ENCODE measurements at regions of chr13 and their contacts with region 1.

Region 1: DNA sequence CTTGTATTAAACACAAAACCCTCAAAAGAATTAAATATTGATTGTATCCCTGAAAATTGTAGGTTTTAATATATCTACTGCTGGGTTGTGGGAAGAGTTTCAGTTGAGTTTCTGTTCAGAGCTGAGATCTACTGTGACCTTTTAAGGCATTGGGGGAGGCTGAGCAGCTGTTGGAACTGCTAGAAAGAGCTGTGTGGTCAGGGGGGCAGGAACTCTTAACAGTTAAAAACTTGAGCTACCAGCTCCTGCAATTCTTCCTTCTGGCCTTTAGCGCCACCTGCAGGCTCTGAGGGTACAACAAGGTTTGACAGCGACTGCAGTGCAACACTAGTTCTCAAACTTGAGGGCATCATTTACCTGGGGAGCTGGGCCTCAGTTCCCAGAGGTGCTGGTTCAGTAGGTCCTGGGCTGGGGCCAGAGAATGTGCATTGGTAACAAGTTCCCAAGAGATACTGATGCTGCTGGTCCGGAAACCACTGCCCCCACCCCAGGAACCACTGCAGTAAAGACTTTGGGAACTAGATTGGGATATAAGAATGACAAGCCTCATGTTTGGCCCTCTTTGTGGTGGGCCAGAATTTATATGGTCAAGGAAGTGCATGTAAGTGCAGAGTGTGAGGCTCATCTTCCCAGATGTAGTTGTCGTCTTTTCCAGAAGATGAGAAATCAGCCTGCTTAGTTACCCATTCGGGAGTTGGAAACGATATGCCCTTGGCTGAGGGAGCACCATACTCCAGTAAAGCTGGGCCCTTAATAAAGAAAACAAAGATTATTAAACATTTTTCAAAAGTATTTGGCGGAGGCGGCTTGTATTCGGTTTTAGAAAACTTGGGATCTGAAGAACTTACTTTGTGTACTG is 2.6 kb downstream of the RNASEH2B start:
- DNase-seq: peak; percentile 58 to 91 (median 66)
- ATAC-seq: peak; percentile 67
- H3K4me3 ChIP-seq: peak overlapping the region; percentile 73; the same call in 1 of the 2 replicates
- H3K27ac ChIP-seq: peak overlapping the region; percentile 97
- H3K4me1 ChIP-seq: peaks cover 24 to 38% of the 10 kb centered on the region in 2 experiments
- H3K27me3 ChIP-seq: no peaks in the 10 kb centered on the region
- CTCF ChIP-seq: peak; percentile 67 to 80 (median 78)
- EP300 ChIP-seq: peak; percentile 80
- POLR2A ChIP-seq: no peak
- RAD21 ChIP-seq: peak; percentile 74 to 76

Region 2: DNA sequence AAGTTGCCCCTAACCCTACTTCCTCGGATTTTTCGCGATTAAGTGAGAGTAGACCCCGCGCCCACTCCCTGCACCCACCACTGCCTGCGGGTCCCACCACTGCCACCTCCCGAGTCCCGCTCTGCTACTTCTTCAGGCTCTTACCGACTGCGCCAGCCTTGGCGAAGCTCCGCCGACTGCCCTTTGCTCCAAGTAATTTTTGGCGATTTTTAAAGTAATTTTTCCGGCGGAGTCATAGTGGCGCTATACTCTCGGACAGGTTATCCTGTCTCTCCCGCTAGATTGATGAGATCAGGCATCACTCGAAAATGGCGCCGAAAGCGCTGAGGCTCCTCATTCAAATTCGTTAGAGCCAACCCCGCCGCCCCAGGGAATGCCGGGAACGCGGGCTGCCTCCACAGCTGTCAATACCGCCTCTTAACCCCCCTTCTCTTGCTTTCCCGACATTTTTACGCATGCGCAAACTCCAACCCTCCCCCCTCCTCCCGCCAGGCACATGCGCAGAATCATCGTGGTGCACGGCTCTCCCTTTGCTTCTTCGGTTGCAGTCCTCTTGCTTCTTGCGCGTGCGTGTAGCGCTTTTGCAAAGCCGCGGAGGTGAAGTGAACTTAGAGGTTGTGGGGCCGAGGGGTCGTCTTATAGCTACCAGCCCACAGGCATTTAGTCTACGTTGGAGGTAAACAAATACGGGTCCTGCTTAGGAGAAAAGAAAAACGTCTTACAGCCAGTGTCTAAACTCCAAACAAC is 830.3 kb before region 1 on chr13:
- CTCF ChIA-PET with region 1: no interaction called
- POLR2A ChIA-PET with region 1: interaction called, 3 read pairs
- in situ Hi-C with region 1: no loop called
- intact Hi-C with region 1: loop called (anchors 5 kb)
- DNase-seq: peak; percentile 86 to 97 (median 90)
- ATAC-seq: peak; percentile 74
- H3K4me3 ChIP-seq: peak overlapping the region; percentile 69
- H3K27ac ChIP-seq: peak overlapping the region; percentile 98
- H3K4me1 ChIP-seq: peaks cover 2 to 5% of the 10 kb centered on the region in 2 experiments; a peak in 2 of 5 replicates
- H3K27me3 ChIP-seq: no peaks in the 10 kb centered on the region
- CTCF ChIP-seq: peak in 2 of 3 experiments; percentile 8 to 23; a peak in 2 of 6 replicates
- EP300 ChIP-seq: no peak; the same call in 1 of the 2 replicates
- POLR2A ChIP-seq: peak; percentile 82
- RAD21 ChIP-seq: no peak

Region 3: GRCh38 chr13:50421473-50422130 is 490.6 kb before region 1 on chr13:
- CTCF ChIA-PET with region 1: no interaction called
- POLR2A ChIA-PET with region 1: no interaction called
- in situ Hi-C with region 1: no loop called
- intact Hi-C with region 1: loop called (anchors 10 kb)
- DNase-seq: no peak
- ATAC-seq: peak; percentile 40
- H3K4me3 ChIP-seq: no peak overlapping the region
- H3K27ac ChIP-seq: peak overlapping the region; percentile 75; the same call in 2 of the 3 replicates
- H3K4me1 ChIP-seq: peaks cover 0 to 38% of the 10 kb centered on the region in 2 experiments; a peak in 2 of 5 replicates
- H3K27me3 ChIP-seq: no peaks in the 10 kb centered on the region
- CTCF ChIP-seq: no peak
- EP300 ChIP-seq: no peak
- POLR2A ChIP-seq: no peak
- RAD21 ChIP-seq: no peak

Region 4: GRCh38 chr13:50617134-50617721 is 294.9 kb before region 1 on chr13:
- CTCF ChIA-PET with region 1: no interaction called
- POLR2A ChIA-PET with region 1: no interaction called
- in situ Hi-C with region 1: no loop called
- intact Hi-C with region 1: loop called (anchors 10 kb)
- DNase-seq: no peak
- ATAC-seq: no peak
- H3K4me3 ChIP-seq: no peak overlapping the region
- H3K27ac ChIP-seq: no peak overlapping the region
- H3K4me1 ChIP-seq: peaks cover 3 to 23% of the 10 kb centered on the region in 2 experiments; a peak in 3 of 5 replicates
- H3K27me3 ChIP-seq: no peaks in the 10 kb centered on the region
- CTCF ChIP-seq: no peak
- EP300 ChIP-seq: no peak
- POLR2A ChIP-seq: no peak
- RAD21 ChIP-seq: no peak

Region 5: DNA sequence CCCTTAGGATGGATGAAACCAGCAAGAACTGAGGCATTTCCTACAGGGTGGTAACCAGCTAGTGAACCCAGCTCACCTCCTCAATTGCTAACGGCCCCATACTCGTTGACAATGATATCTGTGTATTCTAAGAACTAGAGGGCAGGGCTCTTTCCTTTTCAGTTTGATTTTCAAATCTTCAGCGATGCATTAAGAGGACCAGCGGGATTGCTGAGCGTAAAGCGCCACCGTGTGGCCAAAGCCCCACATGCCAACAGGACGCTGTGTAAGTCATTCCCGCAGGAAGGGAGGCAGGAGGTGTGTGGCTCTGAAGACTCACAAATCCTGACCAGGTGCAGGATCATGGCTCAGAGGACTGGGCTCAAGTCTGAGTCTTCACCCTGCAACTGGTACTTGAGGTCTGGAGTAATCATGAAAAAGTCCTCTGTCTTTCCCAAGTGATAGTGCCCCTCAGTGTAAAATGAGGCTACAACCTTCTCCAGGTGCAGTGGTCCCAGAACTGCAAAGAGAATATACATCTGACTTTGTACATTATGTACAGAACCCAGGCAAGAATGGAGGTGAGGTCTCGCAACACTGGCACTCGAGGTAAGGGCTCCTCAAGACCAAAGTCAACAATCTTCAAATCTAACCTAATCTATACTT is 158.0 kb after region 1 on chr13:
- CTCF ChIA-PET with region 1: no interaction called
- POLR2A ChIA-PET with region 1: no interaction called
- in situ Hi-C with region 1: no loop called
- intact Hi-C with region 1: loop called (anchors 10 kb)
- DNase-seq: peak; percentile 48 to 76 (median 58)
- ATAC-seq: peak; percentile 96
- H3K4me3 ChIP-seq: no peak overlapping the region
- H3K27ac ChIP-seq: no peak overlapping the region
- H3K4me1 ChIP-seq: no peaks in the 10 kb centered on the region
- H3K27me3 ChIP-seq: peaks cover 0 to 22% of the 10 kb centered on the region in 2 experiments; a peak in 4 of 5 replicates
- CTCF ChIP-seq: peak; percentile 71 to 88 (median 85)
- EP300 ChIP-seq: no peak
- POLR2A ChIP-seq: no peak
- RAD21 ChIP-seq: peak; percentile 83 to 88

Region 6: GRCh38 chr13:51576754-51577153 is 664.6 kb after region 1 on chr13:
- CTCF ChIA-PET with region 1: no interaction called
- POLR2A ChIA-PET with region 1: no interaction called
- in situ Hi-C with region 1: no loop called
- intact Hi-C with region 1: no loop called
- DNase-seq: no peak
- ATAC-seq: no peak
- H3K4me3 ChIP-seq: no peak overlapping the region
- H3K27ac ChIP-seq: no peak overlapping the region
- H3K4me1 ChIP-seq: no peaks in the 10 kb centered on the region
- H3K27me3 ChIP-seq: no peaks in the 10 kb centered on the region
- CTCF ChIP-seq: no peak
- EP300 ChIP-seq: no peak
- POLR2A ChIP-seq: no peak
- RAD21 ChIP-seq: no peak

Measured in K562 (cell line).